ENCODE measurements at regions of chr12 and their contacts with region 1.

Region 1: DNA sequence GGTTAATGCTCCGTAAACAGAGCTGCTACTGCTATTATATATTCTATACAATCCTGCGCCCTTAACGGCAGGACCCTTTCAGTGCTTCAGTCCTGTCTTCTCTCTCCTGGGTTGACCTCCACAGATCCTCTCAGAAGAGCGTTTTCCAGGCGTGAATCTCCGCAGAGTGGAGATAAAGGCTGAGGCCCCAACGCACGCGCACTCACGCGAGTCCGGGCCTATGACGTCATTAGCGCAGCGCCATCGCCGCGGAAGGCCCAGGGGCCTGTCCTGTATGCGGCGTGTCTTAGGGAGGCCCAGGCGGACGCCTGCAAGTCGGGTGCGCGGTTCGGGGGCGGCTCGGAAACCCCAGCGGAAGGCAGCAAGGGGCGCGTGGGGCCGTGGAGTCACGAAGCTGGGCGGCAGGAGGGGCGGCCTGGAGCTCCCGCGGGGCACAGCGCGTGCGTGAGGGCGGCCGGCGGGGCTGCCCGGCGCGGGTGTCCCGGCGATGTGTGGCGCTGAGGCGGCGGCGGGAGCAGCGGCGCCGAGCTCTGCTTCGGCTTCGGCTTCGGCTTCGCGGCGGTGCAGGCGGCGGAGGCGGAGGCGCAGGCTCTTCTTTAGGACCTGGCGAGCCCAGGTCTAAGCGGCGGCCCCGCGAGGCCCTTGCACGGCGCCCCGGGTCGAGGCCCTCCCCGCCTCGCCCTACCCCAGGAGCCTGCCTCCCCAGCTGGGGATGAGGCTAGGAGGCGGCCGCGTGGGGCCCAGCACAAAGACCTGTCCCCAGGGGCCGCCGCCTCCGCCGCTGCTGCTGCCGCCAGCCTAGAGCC is at the start of gene MAPKAPK5:
- DNase-seq: peak; percentile 95
- ATAC-seq: peak; percentile 95 to 98 (median 96)
- H3K4me3 ChIP-seq: peak within 1 kb of the TSS; percentile 62 to 99 (median 88)
- H3K27ac ChIP-seq: peak within 1 kb of the TSS; percentile 85 to 99 (median 96)
- H3K4me1 ChIP-seq: peaks cover 6 to 56% (median 44%) of the 10 kb centered on the region in 9 donors
- H3K27me3 ChIP-seq: no peaks in the 10 kb centered on the region
- CTCF ChIP-seq: no peak
- total RNA-seq, gene MAPKAPK5: 22.1 to 28.6 (median 23.6) TPM

Region 2: DNA sequence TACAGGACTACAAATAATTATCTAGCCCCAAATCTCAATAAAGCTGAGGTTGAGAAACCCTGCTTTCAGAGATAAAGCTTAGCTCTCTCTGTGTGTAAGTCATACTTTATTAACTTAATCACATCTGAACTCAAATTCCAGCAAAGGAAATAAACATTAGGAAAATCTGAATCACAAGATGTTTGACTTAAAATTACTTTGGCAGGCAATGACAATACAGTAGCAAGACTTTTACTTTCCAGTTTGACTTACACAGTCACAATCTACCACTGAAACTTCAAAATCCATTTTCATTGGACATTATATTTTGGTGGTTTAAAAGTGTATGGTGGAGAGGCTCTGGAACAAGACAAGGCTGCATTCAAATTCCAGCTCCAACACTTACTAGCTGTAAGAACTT is 159.6 kb after region 1 on chr12:
- intact Hi-C with region 1: no loop called
- DNase-seq: no peak
- ATAC-seq: no peak
- H3K4me3 ChIP-seq: peak overlapping the region in 1 of 10 donors; percentile 29
- H3K27ac ChIP-seq: peak overlapping the region in 1 of 10 donors; percentile 58
- H3K4me1 ChIP-seq: peaks cover 0 to 68% (median 11%) of the 10 kb centered on the region in 9 donors
- H3K27me3 ChIP-seq: peaks cover 0 to 5% (median 0%) of the 10 kb centered on the region in 7 donors
- CTCF ChIP-seq: no peak

Region 3: DNA sequence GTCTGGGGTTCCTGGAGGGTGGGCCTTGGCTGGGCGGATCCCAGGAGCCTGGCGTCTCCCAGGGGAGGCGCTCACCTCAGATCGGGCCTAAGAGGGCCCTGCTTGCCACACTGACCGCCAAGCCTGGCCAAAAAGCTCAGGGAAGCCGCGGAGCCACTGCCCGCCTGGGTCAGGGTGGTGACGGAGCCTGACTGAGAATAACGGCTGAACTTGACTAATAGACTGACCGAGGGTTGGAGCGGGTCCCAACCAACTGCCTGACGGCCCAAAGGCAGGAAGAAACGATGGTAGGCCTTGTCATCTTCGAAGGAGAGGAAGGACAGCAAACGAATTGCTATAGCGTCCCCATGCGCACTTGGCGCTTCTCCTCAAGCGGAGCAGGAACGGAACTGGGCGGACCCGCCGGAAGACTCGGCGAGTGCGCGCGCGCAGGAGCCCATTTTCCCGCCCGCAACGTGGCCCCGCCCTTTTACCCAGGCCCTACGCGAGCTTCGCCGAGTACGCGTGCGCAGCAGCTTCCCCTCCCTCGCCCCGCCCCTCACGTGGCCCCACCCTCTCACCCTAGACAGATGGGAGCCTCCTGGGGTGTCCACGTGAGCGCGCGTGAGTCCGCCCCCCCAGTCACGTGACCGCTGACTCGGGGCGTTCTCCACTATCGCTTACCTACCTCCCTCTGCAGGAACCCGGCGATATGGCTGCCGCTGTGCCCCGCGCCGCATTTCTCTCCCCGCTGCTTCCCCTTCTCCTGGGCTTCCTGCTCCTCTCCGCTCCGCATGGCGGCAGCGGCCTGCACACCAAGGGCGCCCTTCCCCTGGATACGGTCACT is 171.0 kb after region 1 on chr12 and contains the starts of genes ERP29 and TMEM116:
- intact Hi-C with region 1: loop called in 2 of 10 experiments (anchors 5 kb)
- DNase-seq: peak; percentile 99 to 100
- ATAC-seq: peak; percentile 92 to 97 (median 95)
- H3K4me3 ChIP-seq: peak within 1 kb of the TSS; percentile 73 to 99 (median 90)
- H3K27ac ChIP-seq: peak within 1 kb of the TSS; percentile 92 to 98 (median 95)
- H3K4me1 ChIP-seq: peaks cover 2 to 48% (median 27%) of the 10 kb centered on the region in 9 donors
- H3K27me3 ChIP-seq: no peaks in the 10 kb centered on the region
- CTCF ChIP-seq: peak; percentile 41 to 73 (median 63)
- total RNA-seq, gene ERP29: 36.3 to 77.4 (median 46.6) TPM
- total RNA-seq, gene TMEM116: 31.2 to 54.1 (median 40.7) TPM

Region 4: GRCh38 chr12:112046003-112046402 is 204.1 kb after region 1 on chr12:
- intact Hi-C with region 1: no loop called
- DNase-seq: no peak
- ATAC-seq: peak in 1 of 8 donors; percentile 24
- H3K4me3 ChIP-seq: no peak overlapping the region
- H3K27ac ChIP-seq: peak overlapping the region in 1 of 10 donors; percentile 3
- H3K4me1 ChIP-seq: peaks cover 0 to 11% (median 0%) of the 10 kb centered on the region in 9 donors
- H3K27me3 ChIP-seq: no peaks in the 10 kb centered on the region
- CTCF ChIP-seq: no peak